ENCODE measurements at regions of chr2 and their contacts with region 1.

Region 1: GRCh38 chr2:156332534-156333273 is at the start of gene NR4A2:
- DNase-seq: peak; percentile 84
- H3K4me3 Mint-ChIP-seq: peak within 1 kb of the TSS; percentile 95
- H3K27ac Mint-ChIP-seq: peak within 1 kb of the TSS; percentile 99
- H3K4me1 Mint-ChIP-seq: peaks cover 51% of the 10 kb centered on the region
- H3K27me3 Mint-ChIP-seq: peaks cover 11% of the 10 kb centered on the region
- total RNA-seq, gene NR4A2: 22.1 and 24.0 TPM in 2 replicates

Region 2: DNA sequence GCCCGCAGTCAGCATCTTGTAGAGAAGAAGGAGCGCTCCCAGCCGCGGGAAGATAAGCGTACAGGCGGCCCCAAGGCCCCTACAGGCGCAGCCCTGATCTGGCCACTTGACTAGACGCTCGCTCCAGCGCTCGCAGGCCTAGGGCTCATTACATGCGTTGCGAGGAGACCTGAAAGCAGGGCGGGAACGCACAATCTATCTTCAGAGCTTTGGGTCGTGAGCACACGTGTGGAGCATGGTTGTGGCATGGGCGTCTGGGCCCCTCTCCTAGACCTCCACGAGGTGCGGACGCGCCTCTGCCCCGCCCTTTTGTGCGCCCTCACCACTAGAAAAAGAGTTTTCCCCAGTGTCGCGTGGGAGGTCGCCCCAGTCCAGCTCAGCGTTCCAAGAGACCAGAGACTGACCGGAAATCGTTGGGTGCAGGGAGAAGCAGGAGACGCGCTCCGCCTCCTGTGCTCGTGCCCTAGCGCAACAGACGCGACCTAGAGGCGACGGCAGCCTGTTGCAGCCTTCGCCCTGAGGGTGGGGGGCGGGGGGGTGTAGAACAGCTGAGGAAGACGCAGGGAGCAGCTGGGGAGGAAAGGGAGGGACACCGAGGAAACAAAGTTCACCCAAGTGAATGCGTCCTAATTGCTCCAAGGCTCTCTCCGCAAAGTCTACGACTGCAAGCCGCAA is 12.8 kb before region 1 on chr2:
- intact Hi-C with region 1: loop called (anchors 1 kb)
- DNase-seq: no peak
- H3K4me3 Mint-ChIP-seq: peak overlapping the region; percentile 49
- H3K27ac Mint-ChIP-seq: no peak overlapping the region
- H3K4me1 Mint-ChIP-seq: peaks cover 31% of the 10 kb centered on the region
- H3K27me3 Mint-ChIP-seq: peaks cover 82% of the 10 kb centered on the region

Region 3: DNA sequence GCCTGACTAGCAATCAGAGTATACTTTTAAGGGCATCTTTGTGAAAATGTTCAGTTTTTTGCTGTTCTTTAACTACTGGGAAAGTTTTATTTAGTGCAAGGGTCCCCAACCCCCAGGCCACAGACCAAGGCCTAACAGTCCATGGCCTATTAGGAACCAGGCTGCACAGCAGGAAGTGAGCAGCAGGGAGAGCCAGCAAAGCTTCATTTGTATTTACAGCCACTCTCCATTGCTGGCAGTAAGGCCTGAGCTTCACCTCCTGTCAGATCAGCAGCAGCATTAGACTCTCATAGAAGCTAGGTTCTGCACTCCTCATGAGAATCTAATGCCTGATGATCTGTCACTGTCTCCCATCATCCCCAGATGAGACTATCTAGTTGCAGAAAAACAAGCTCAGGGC is 16.9 kb after region 1 on chr2:
- intact Hi-C with region 1: no loop called
- DNase-seq: no peak
- H3K4me3 Mint-ChIP-seq: no peak overlapping the region
- H3K27ac Mint-ChIP-seq: no peak overlapping the region
- H3K4me1 Mint-ChIP-seq: peaks cover 7% of the 10 kb centered on the region
- H3K27me3 Mint-ChIP-seq: peaks cover 7% of the 10 kb centered on the region

Region 4: DNA sequence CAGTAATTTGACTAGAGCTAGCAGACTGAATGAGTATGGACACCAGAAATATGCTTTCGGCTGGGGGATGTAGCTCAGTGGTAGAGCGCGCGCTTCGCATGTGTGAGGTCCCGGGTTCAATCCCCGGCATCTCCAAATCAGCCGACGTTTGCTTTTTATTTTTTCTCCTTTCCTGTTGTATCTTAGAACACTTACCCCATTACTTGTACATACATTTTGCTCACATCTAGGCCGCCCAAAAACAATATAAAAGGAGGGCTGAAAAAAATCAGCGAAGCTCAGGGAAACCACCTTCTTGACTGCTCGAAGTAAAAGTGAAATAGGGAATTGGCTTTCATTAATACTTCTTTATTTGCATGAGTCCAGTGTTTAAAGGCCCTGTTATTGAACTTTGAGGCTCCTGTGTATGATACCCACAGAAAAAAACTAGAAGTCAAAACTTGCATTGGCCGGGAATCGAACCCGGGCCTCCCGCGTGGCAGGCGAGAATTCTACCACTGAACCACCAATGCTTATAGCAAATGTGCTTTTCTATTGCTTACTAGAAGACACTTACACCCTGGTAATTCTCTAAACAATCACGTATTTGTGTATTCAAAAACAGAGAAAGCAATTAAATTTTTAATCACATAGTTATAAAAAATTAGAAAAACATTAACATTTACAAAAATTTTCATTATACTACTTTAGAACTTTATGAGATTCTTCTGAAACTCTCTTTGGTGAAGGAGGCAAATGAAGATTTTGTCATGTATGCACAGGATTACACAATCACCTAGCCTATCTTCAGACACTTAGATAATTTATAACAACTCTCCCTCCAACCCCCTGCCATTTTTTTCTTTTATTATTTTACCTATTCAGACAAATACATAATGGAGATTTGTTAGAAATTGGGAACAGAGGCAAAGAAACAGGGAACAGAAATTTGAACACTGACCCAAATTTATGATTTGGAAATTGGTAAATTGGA is 68.3 kb after region 1 on chr2:
- intact Hi-C with region 1: loop called (anchors 1 kb)
- DNase-seq: peak; percentile 65
- H3K4me3 Mint-ChIP-seq: peak overlapping the region; percentile 89
- H3K27ac Mint-ChIP-seq: peak overlapping the region; percentile 91
- H3K4me1 Mint-ChIP-seq: peaks cover 29% of the 10 kb centered on the region
- H3K27me3 Mint-ChIP-seq: no peaks in the 10 kb centered on the region

Region 5: DNA sequence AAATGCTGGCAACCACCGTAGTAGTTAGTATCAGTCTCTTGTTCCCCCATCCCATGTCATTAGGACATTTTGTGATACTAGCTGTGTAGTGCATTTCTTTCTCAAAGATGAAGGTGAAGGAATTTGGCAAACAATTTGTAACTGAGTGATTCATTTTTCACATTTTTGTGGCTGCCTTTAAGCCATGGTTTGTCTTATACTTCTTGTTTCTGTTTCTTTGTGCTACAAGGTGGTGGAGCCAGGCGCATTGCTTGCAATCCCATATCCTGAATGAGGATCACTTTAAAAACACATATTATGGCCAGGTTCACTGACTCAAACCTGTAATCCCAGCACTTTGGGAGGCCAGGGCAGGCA is 144.1 kb after region 1 on chr2:
- intact Hi-C with region 1: loop called (anchors 2 kb)
- DNase-seq: no peak
- H3K4me3 Mint-ChIP-seq: no peak overlapping the region
- H3K27ac Mint-ChIP-seq: peak overlapping the region; percentile 66
- H3K4me1 Mint-ChIP-seq: peaks cover 53% of the 10 kb centered on the region
- H3K27me3 Mint-ChIP-seq: no peaks in the 10 kb centered on the region

Region 6: DNA sequence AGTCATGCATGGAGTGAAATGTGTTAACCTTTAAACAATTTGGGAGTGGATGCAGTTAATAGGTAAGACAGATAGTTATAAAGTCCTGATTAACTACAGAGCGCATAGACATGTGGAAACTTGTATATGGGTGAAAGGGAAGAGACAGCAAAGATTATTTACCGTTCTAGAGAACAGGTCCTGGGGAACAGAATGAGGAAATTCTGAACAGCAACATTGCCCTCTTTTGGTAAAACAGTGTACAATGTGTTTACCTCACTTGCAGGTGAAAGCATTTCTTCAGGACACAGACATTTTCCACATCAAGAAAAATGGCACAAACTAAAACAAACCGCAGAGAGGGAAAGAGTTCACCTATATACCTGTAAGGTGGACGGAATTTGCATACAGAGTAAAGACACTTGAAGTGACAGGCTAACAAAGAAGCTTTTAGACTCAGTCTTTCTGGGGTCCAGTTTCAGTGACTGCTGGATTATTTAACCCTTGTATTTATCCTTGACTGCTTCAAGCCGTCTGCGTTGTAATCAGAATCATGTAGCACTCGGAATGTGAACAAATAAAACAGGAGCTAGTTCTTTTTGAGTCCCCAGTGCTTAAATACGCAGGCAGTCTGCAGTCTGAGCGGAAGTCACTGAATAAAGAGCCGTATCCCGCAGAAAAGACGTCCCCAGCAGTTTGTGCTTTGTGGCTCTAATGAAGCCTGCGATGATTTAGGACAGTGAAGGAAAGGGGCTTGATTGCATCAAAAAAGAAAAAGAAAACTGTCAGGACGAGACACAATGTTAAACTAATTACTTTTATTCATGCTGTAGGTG is 560.0 kb after region 1 on chr2:
- intact Hi-C with region 1: loop called (anchors 5 kb)
- DNase-seq: no peak
- H3K4me3 Mint-ChIP-seq: peak overlapping the region; percentile 27
- H3K27ac Mint-ChIP-seq: no peak overlapping the region
- H3K4me1 Mint-ChIP-seq: peaks cover 42% of the 10 kb centered on the region
- H3K27me3 Mint-ChIP-seq: peaks cover 55% of the 10 kb centered on the region

Region 7: GRCh38 chr2:157413326-157414035 is 1080.8 kb after region 1 on chr2:
- intact Hi-C with region 1: loop called (anchors 10 kb)
- DNase-seq: peak; percentile 59
- H3K4me3 Mint-ChIP-seq: peak overlapping the region; percentile 74
- H3K27ac Mint-ChIP-seq: peak overlapping the region; percentile 96
- H3K4me1 Mint-ChIP-seq: peaks cover 74% of the 10 kb centered on the region
- H3K27me3 Mint-ChIP-seq: no peaks in the 10 kb centered on the region

Measured in activated T-helper 2 cell treated with anti-CD3 and anti-CD28 coated beads, Interferon-gamma antibody, Interleukin-2, Interleukin-4, amounts not matched to agents 10 μg/mL and 5 μg/mL and 100 μg/mL, durations not matched to agents 14 hours and 24 hours and 36 hours (primary cell).